Aorta (tissue), 5 donors: ENCODE measurements at regions of chr21 and their contacts with region 1.

Region 1: GRCh38 chr21:45554477-45555175 is 12.4 kb upstream of the SLC19A1 start:
- DNase-seq: peak; percentile 88 to 96
- ATAC-seq: peak; percentile 90
- H3K4me3 ChIP-seq: peak overlapping the region; percentile 49 to 71
- H3K27ac ChIP-seq: peak overlapping the region in 1 of 2 donors; percentile 39
- H3K4me1 ChIP-seq: no peaks in the 10 kb centered on the region
- H3K27me3 ChIP-seq: peaks cover 0 to 1% of the 10 kb centered on the region in 2 donors

Region 2: DNA sequence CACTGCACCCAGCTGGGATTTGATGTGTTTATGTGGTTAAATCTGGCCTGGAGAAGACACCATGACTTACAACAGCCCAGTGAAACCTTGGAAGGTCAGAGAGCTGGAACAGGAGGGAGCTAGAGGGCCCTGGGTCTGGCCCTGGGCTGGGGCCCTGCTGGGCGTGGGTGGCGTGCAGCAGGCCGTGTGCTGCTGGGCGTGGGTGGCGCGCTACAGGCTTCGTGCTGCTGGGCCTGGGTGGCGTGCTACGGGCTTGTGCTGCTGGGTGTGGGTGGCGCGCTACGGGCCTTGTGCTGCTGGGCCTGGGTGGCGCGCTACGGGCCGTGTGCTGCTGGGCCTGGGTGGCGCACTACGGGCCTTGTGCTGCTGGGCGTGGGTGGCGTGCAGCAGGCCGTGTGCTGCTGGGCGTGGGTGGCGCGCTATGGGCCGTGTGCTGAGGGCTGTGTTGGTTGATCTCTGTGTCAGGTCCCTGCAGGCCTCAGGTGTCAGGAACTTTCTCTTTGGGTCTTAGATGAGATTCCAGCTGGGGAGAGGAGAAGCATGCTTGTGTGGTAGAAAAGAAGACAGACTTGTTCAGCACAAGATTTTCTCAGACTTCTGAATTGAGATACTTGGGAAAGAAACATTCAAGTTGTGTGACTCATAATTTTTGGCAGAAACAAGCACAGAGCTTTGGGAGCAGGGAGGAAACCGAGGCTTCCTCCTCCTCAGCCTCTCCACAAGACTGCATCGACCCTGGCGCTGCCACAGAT is 83.7 kb before region 1 on chr21:
- intact Hi-C with region 1: no loop called
- DNase-seq: peak; percentile 64 to 80
- ATAC-seq: peak; percentile 66
- H3K4me3 ChIP-seq: no peak overlapping the region
- H3K27ac ChIP-seq: peak overlapping the region; percentile 79 to 93
- H3K4me1 ChIP-seq: no peaks in the 10 kb centered on the region
- H3K27me3 ChIP-seq: no peaks in the 10 kb centered on the region

Region 3: GRCh38 chr21:45596704-45597318 is 42.2 kb after region 1 on chr21:
- intact Hi-C with region 1: loop called in 1 of 2 experiments (anchors 2 kb)
- DNase-seq: peak; percentile 79 to 87
- ATAC-seq: peak; percentile 75
- H3K4me3 ChIP-seq: no peak overlapping the region
- H3K27ac ChIP-seq: no peak overlapping the region
- H3K4me1 ChIP-seq: no peaks in the 10 kb centered on the region
- H3K27me3 ChIP-seq: no peaks in the 10 kb centered on the region

Region 4: GRCh38 chr21:45721671-45722070 is 167.0 kb after region 1 on chr21:
- intact Hi-C with region 1: no loop called
- DNase-seq: no peak
- ATAC-seq: no peak
- H3K4me3 ChIP-seq: no peak overlapping the region
- H3K27ac ChIP-seq: no peak overlapping the region
- H3K4me1 ChIP-seq: no peaks in the 10 kb centered on the region
- H3K27me3 ChIP-seq: peaks cover 0 to 1% of the 10 kb centered on the region in 2 donors

Region 5: GRCh38 chr21:45820171-45821091 is 265.8 kb after region 1 on chr21:
- intact Hi-C with region 1: loop called (anchors 1 to 5 kb)
- DNase-seq: peak; percentile 83 to 90
- ATAC-seq: peak; percentile 75
- H3K4me3 ChIP-seq: no peak overlapping the region
- H3K27ac ChIP-seq: no peak overlapping the region
- H3K4me1 ChIP-seq: no peaks in the 10 kb centered on the region
- H3K27me3 ChIP-seq: no peaks in the 10 kb centered on the region

Region 6: GRCh38 chr21:45923146-45923545 is 368.5 kb after region 1 on chr21:
- intact Hi-C with region 1: loop called (anchors 5 to 10 kb)
- DNase-seq: peak; percentile 78 to 89
- ATAC-seq: peak; percentile 90
- H3K4me3 ChIP-seq: no peak overlapping the region
- H3K27ac ChIP-seq: no peak overlapping the region
- H3K4me1 ChIP-seq: no peaks in the 10 kb centered on the region
- H3K27me3 ChIP-seq: no peaks in the 10 kb centered on the region